ENCODE measurements at regions of chr1 and their contacts with region 1.

Region 1: GRCh38 chr1:40774266-40774998 is 9.2 kb upstream of the KCNQ4 start:
- DNase-seq: peak; percentile 46 to 64
- H3K4me3 ChIP-seq: no peak overlapping the region
- H3K27ac ChIP-seq: no peak overlapping the region
- H3K4me1 ChIP-seq: no peaks in the 10 kb centered on the region
- H3K27me3 ChIP-seq: no peaks in the 10 kb centered on the region
- CTCF ChIP-seq: peak; percentile 66 to 79 (median 76)
- POLR2A ChIP-seq: no peak

Region 2: DNA sequence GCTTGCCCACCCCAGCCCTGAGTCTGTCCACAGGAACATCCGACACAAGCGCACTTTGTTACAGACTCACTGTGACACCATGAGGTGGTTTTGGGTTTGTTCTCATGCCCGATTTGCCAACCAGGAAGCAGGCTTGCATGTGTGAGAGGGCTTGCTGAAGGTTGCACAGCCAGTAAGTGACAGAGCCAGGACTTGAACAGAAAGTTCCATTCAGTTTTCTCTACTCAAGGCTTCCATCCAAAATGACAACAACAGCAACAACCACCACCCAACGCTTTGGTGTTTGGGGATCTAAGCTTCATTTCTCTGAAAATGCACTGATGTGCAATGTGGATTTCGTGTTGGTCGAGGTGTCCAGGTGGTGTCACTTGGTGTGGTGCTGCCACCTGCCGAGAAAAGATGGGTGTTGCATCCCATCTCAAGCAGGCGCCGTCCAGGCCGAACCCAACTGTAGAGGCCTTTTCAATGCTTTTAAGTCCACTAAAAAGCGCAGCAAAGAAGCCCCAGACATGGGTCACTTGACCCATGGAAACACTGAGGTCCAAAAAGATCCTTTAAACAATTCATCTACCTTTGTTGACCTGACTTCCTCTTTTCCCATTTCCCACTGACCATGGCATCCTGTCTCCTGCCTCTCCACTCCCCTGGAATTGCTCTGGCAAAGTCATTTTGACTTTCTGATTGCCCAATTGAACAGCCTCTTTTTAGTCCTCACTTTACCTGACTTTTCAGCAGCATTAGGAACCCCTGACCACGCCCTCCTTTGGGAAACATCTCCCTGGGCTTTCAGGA is 75.6 kb after region 1 on chr1:
- intact Hi-C with region 1: loop called (anchors 10 kb)
- DNase-seq: peak; percentile 69 to 70
- H3K4me3 ChIP-seq: no peak overlapping the region
- H3K27ac ChIP-seq: no peak overlapping the region
- H3K4me1 ChIP-seq: no peaks in the 10 kb centered on the region
- H3K27me3 ChIP-seq: no peaks in the 10 kb centered on the region
- CTCF ChIP-seq: peak; percentile 83 to 91 (median 88)
- POLR2A ChIP-seq: no peak

Measured in uterus (tissue), 4 donors.